HEK293 (cell line): ENCODE measurements at regions of chr19 and their contacts with region 1.

Region 1: DNA sequence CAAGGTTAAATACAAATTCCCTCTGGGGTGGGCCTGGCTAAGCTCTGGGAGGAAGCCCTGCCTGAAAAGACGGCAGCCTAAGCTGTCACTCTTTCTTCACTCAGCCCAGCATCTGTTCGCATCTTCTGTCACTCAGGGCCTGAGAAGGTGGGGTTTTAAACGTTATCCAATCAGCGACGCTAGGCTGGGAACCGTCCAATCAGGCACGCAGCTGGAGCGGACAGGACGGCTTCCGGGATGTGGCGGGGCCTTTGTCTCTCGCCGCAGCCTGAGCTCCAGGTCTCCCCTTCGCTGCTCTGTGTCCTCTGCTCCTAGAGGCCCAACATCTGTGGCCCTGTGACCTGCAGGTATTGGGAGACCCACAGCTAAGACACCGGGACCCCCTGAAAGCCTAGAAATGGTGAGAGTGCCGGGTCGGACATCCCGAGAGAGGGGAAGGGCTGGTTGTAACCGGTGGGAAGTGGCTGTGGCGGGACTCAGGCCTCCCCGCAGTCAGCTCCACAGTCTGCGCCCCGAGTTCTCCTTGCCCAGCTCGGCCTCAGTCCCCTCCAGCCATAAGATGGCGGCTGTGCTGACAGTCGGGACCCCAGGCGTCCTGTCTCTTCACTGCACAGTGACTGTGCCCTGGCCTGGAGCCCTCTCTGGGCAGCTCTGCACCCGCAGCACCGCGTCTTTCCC is at the start of gene ZNF431:
- H3K4me3 ChIP-seq: peak within 1 kb of the TSS; percentile 58
- H3K27ac ChIP-seq: peak within 1 kb of the TSS; percentile 73
- H3K4me1 ChIP-seq: no peaks in the 10 kb centered on the region
- CTCF ChIP-seq: no peak

Region 2: DNA sequence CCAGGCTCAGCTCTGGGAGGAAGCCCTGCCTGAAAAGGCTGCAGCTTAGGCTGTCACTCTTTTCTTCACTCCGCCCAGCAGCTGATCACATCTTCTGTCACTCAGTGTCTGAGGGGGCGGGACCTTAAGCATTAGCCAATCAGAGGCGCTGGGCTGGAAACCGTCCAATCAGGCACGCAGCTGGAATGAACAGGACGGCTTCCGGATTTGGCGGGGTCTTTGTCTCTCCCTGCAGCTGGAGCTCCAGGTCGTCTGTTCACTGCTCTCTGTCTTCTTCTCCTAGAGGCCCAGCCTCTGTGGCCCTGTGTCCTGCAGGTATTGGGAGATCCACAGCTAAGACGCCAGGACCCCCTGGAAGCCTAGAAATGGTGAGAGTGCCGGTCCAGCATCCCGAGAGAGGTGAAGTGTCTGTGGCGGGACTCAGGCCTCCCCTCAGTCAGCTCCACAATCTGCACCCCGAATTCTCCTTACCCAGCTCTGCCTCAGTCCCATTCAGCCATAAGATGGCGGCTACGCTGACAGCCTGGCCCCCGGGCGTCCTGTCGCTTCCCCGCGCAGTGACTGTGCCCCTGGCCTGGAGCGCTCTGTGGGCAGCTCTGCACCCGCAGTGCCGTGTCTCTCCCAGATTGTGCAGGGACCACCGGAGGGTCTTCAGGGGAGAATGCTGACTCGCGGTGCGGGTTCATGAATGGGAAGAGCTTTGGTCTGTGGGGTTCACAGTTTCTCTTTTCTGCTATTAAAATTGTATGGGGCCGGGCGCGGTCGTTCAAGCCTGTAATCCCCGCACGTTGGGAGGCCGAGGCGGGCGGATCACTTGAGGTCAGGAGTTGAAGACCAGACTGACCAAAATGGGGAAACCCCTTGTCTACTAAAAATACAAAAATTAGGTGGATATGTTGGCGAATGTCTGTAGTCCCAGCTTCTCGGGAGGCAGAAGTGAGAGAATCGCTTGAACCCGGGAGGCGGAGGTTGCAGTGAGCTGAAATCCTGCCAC is 365.5 kb before region 1 on chr19 and contains the start of gene ZNF66:
- CTCF ChIA-PET with region 1: no interaction called
- POLR2A ChIA-PET with region 1: interaction called, 11 read pairs
- H3K4me3 ChIP-seq: peak within 1 kb of the TSS; percentile 80
- H3K27ac ChIP-seq: no peak within 1 kb of the TSS
- H3K4me1 ChIP-seq: no peaks in the 10 kb centered on the region
- CTCF ChIP-seq: no peak

Region 3: GRCh38 chr19:21082011-21082975 is 59.6 kb before region 1 on chr19 and contains the start of gene ZNF714:
- CTCF ChIA-PET with region 1: no interaction called
- POLR2A ChIA-PET with region 1: interaction called, 24 read pairs
- H3K4me3 ChIP-seq: peak within 1 kb of the TSS; percentile 84
- H3K27ac ChIP-seq: peak within 1 kb of the TSS; percentile 69
- H3K4me1 ChIP-seq: peaks cover 9% of the 10 kb centered on the region; the same call in 1 of the 2 replicates
- CTCF ChIP-seq: no peak